Thyroid gland (tissue), 4 donors: ENCODE measurements at regions of chr7 and their contacts with region 1.

Region 1: GRCh38 chr7:108002726-108003598 is at the start of gene LAMB1:
- DNase-seq: peak; percentile 77 to 79
- H3K4me3 ChIP-seq: peak within 1 kb of the TSS; percentile 56 to 93 (median 92)
- H3K27ac ChIP-seq: peak within 1 kb of the TSS; percentile 53 to 81 (median 59)
- H3K4me1 ChIP-seq: peaks cover 13 to 35% of the 10 kb centered on the region in 2 donors
- H3K27me3 ChIP-seq: no peaks in the 10 kb centered on the region
- CTCF ChIP-seq: no peak
- POLR2A ChIP-seq: peak in 1 of 2 donors; percentile 76
- total RNA-seq, gene LAMB1: 103 to 112 (median 106) TPM

Region 2: DNA sequence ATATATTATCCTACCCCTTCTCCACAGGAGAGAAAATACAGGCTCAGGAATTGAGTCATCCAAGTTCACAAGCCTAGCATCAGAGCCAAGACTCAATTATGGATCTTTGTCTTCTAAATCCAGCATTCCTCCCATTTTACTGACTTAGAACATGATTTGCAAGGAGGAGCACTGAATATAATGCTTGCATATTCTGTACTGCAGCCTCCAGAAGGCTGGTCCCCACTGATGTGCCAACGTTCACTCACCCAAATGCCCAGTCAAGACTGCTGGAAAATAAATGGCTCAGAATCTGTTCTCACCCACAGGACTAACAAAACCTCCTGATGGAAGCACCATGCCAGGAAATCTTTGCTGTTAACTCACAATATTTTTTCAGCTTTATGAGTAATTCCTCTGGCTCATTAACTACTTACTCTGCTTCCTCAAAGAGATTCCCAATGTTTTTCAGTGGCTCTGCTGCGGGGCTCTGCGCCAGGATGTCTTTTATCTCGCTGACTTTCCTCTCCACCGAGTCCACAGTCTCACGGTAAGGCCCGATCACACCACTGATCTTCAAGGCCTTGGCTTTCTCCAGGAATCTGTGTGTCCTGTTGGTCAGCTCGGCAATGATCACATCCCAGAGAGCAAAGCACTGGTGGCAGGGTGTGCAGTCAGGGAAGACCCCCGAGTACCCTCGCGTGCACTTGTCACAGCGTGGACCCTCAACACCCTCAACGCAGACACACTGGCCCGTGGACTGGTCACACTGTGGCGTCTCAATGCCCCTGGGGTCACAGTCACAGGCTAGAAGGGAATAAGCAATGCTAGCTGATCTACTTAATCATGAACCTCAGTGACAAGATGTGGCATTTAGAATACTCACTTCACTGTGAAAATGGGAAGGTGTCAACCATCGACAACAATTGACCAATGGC is 63.1 kb before region 1 on chr7:
- intact Hi-C with region 1: loop called (anchors 10 kb)
- DNase-seq: peak in 1 of 2 donors; percentile 12
- H3K4me3 ChIP-seq: no peak overlapping the region
- H3K27ac ChIP-seq: peak overlapping the region in 2 of 3 donors; percentile 40 to 53
- H3K4me1 ChIP-seq: peaks cover 14 to 16% of the 10 kb centered on the region in 2 donors
- H3K27me3 ChIP-seq: no peaks in the 10 kb centered on the region
- CTCF ChIP-seq: no peak
- POLR2A ChIP-seq: no peak